Natural killer cell (primary cell): ENCODE measurements at regions of chr2 and their contacts with region 1.

Region 1: GRCh38 chr2:37982147-37982582 is 57.1 kb downstream of the RMDN2 start:
- DNase-seq: peak; percentile 53 to 75
- ATAC-seq: peak in 1 of 3 donors; percentile 45
- H3K4me3 ChIP-seq: no peak overlapping the region
- H3K4me3 Mint-ChIP-seq: no peak overlapping the region
- H3K27ac ChIP-seq: no peak overlapping the region
- H3K27ac Mint-ChIP-seq: no peak overlapping the region
- H3K4me1 ChIP-seq: peaks cover 4% of the 10 kb centered on the region
- H3K4me1 Mint-ChIP-seq: peaks cover 7 to 12% of the 10 kb centered on the region in 2 donors
- H3K27me3 ChIP-seq: no peaks in the 10 kb centered on the region
- H3K27me3 Mint-ChIP-seq: no peaks in the 10 kb centered on the region
- CTCF ChIP-seq: peak; percentile 95

Region 2: GRCh38 chr2:38092196-38092922 is 110.2 kb after region 1 on chr2:
- intact Hi-C with region 1: no loop called
- DNase-seq: no peak
- ATAC-seq: no peak
- H3K4me3 ChIP-seq: no peak overlapping the region
- H3K4me3 Mint-ChIP-seq: no peak overlapping the region
- H3K27ac ChIP-seq: no peak overlapping the region
- H3K27ac Mint-ChIP-seq: no peak overlapping the region
- H3K4me1 ChIP-seq: no peaks in the 10 kb centered on the region
- H3K4me1 Mint-ChIP-seq: no peaks in the 10 kb centered on the region
- H3K27me3 ChIP-seq: peaks cover 4% of the 10 kb centered on the region
- H3K27me3 Mint-ChIP-seq: peaks cover 17 to 29% of the 10 kb centered on the region in 2 donors
- CTCF ChIP-seq: no peak

Region 3: DNA sequence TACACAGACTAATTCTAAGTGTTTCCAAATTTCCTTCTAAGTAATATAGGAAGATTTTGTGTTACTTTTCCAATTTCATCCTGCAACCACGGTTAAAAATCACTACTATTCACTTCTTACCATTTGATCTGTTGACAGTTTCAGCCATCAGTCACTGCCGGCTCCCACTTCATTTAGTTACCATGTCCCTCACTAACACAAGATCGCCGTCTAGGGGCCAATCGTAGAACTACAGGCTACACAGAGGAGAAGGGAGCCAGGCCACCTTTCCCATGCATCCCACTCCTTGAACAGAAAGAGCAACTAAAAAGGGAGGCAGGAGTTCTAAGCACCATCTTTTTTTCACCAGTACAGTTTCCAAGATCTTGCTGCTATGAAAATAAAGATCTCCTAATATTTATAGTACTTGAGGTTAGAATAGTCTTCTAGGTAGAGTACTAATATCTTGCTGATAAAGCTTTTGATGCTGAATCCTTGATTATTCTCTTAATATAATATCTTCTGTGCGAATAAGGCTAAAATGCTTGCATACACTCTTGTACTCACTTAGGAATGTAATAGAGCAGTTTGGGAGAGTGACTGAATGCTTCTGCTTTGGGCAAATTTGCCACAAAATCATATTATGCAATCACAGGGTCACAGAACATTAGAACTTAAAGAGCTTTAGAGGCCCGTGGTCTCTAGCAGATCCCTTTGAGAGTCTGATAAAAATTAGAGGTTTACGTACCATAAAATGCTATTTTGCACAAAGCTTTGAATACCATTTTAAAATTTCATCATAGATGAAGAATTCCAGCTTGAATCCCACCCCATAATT is 133.3 kb after region 1 on chr2:
- intact Hi-C with region 1: loop called (anchors 1 kb)
- DNase-seq: peak; percentile 48 to 66
- ATAC-seq: peak; percentile 72 to 84 (median 75)
- H3K4me3 ChIP-seq: no peak overlapping the region
- H3K4me3 Mint-ChIP-seq: no peak overlapping the region
- H3K27ac ChIP-seq: no peak overlapping the region
- H3K27ac Mint-ChIP-seq: no peak overlapping the region
- H3K4me1 ChIP-seq: no peaks in the 10 kb centered on the region
- H3K4me1 Mint-ChIP-seq: peaks cover 0 to 6% of the 10 kb centered on the region in 2 donors
- H3K27me3 ChIP-seq: no peaks in the 10 kb centered on the region
- H3K27me3 Mint-ChIP-seq: peaks cover 11 to 56% of the 10 kb centered on the region in 2 donors
- CTCF ChIP-seq: peak; percentile 79

Region 4: DNA sequence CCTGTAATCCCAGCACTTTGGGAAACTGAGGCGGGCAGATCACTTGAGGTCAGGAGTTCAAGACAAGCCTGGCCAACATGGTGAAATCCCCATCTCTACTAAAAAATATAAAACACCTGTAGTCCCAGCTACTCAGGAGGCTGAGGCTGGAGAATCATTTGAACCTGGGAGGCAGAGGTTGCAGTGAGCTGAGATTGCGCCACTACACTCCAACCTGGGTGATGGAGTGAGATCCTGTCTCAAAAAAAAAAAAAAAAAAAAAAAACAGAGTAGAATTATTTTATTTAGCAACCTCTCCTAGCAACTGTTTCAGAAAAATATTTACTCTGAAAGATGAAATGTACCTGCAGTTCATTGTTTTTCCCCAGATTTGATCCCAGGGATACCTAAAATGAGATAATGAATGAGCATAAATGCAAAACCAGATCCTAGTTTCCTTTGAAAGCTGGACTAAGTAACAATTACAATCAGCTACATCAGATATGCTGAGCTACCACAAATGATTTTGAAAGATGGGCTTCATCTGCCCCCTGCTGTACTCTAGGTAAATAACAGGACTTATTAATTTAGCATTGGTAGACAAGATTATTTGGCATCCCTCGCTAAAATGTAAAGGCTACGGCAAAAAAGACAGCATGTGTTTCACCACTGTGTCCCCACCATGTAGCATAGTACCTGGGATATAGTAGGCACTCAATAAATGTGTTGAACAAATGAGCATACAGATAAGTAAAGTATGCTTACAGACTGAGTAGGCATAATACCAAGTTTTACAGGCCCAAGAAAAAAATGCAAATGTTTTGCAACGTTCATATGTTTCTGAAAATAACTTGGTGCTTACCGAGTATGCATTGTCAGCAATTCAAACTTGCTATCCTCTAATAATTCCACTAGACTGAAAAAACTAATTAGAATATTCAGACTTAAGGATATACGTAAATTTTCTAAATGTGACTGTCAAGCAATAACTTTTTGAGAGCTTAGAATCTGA is 292.4 kb after region 1 on chr2:
- intact Hi-C with region 1: loop called (anchors 1 kb)
- DNase-seq: peak in 1 of 2 donors; percentile 65
- ATAC-seq: peak; percentile 79 to 81 (median 80)
- H3K4me3 ChIP-seq: no peak overlapping the region
- H3K4me3 Mint-ChIP-seq: no peak overlapping the region
- H3K27ac ChIP-seq: no peak overlapping the region
- H3K27ac Mint-ChIP-seq: no peak overlapping the region
- H3K4me1 ChIP-seq: no peaks in the 10 kb centered on the region
- H3K4me1 Mint-ChIP-seq: peaks cover 0 to 6% of the 10 kb centered on the region in 2 donors
- H3K27me3 ChIP-seq: no peaks in the 10 kb centered on the region
- H3K27me3 Mint-ChIP-seq: no peaks in the 10 kb centered on the region
- CTCF ChIP-seq: peak; percentile 68

Region 5: GRCh38 chr2:38508311-38509039 is 526.3 kb after region 1 on chr2:
- intact Hi-C with region 1: loop called (anchors 5 kb)
- DNase-seq: peak; percentile 55 to 87
- ATAC-seq: peak; percentile 70 to 85 (median 78)
- H3K4me3 ChIP-seq: no peak overlapping the region
- H3K4me3 Mint-ChIP-seq: no peak overlapping the region
- H3K27ac ChIP-seq: no peak overlapping the region
- H3K27ac Mint-ChIP-seq: no peak overlapping the region
- H3K4me1 ChIP-seq: no peaks in the 10 kb centered on the region
- H3K4me1 Mint-ChIP-seq: no peaks in the 10 kb centered on the region
- H3K27me3 ChIP-seq: no peaks in the 10 kb centered on the region
- H3K27me3 Mint-ChIP-seq: peaks cover 0 to 1% of the 10 kb centered on the region in 2 donors
- CTCF ChIP-seq: peak; percentile 67